ENCODE measurements at regions of chr17 and their contacts with region 1.

Region 1: DNA sequence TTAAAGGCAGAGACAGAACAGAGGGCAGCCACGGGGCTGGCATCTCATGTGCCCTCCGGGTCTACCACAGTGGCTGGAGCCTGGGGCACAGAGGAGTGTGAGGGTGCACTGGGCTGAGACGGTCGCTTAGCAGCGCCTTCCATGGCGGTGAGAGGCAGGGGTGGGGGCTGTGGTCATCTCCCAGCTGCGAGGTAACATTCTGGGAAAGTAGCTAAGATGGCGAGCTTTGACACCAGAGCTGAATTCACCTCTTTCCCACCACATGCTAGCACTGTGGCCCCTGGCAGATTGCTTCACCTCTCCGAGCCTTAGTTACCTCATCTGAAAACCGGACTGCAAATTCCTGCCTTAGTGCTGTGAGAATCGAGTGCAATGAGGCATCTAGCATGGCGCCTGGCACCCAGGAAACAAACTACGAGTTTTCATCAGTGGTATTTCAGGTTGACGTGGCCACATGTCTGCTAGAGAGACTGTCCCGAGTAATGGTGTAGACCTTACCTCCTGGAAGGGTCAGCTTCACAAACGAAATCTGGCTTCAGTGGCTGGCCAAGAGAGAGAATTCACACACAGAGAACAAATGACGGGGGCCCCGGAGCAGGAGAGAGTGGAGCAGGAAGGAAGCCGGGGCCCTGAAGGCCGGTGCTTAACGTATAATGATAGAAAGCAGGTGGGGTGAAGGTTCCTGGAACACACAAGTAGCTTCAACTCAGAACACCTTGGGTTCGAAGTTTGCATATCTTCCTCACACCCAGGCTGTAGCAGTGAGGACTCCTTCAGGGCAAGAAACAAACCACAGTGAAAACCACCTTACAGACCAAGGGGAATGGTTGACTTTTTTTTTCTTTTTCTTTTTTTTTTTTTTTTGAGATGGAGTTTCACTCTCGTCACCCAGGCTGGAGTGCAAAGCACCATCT is 63.9 kb upstream of the RPH3AL start:
- DNase-seq: peak in 13 of 14 experiments; percentile 22 to 86 (median 44)
- ATAC-seq: peak; percentile 30
- H3K4me3 ChIP-seq: peak overlapping the region; percentile 64
- H3K4me3 Mint-ChIP-seq: peak overlapping the region; percentile 88
- H3K27ac ChIP-seq: peak overlapping the region; percentile 78 to 81
- H3K27ac Mint-ChIP-seq: peak overlapping the region; percentile 95
- H3K4me1 ChIP-seq: peaks cover 97% of the 10 kb centered on the region
- H3K4me1 Mint-ChIP-seq: peaks cover 89% of the 10 kb centered on the region
- H3K27me3 ChIP-seq: no peaks in the 10 kb centered on the region
- H3K27me3 Mint-ChIP-seq: no peaks in the 10 kb centered on the region
- CTCF ChIP-seq: no peak

Region 2: DNA sequence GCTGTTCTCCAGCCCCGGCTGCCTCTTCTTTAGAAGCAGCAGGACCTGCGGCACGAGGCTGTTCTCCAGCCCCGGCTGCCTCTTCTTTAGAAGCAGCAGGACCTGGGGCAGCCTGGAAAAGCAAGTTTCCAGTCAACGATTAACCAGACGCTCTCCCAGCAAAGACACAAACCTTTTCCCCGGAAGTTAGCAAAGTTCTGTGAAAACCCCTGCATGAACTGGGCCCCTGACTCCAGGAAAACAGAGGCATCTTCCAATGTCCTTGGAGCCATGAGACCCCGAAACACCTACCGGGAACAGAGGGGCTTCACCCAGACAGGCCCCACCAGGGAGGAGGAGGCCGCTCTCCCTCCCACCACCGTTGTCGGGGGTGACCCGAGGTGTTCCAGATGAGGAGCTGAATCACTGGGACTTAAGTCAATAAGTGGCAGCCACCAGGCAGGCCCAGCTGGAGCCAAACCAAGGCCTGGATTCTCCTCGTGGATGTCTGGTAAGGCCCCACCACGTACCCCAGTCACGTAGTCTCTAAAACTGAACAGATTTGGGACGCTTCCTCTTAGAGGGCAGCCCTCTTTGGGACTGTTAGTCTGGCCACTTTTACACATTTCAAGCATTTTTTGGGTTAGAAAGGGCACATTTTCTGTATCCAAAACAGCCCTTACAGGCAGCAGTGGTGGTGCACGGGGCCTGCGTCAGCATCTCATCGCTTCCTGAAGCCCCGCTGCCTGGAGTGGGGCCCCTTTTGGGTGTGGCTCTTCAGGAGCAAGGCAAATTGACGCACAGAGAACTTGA is 63.9 kb before region 1 on chr17 and contains the start of gene RPH3AL:
- CTCF ChIA-PET with region 1: no interaction called
- POLR2A ChIA-PET with region 1: no interaction called
- intact Hi-C with region 1: no loop called
- DNase-seq: no peak
- ATAC-seq: no peak
- H3K4me3 ChIP-seq: no peak within 1 kb of the TSS
- H3K4me3 Mint-ChIP-seq: no peak within 1 kb of the TSS
- H3K27ac ChIP-seq: no peak within 1 kb of the TSS
- H3K27ac Mint-ChIP-seq: no peak within 1 kb of the TSS
- H3K4me1 ChIP-seq: no peaks in the 10 kb centered on the region
- H3K4me1 Mint-ChIP-seq: no peaks in the 10 kb centered on the region
- H3K27me3 ChIP-seq: no peaks in the 10 kb centered on the region
- H3K27me3 Mint-ChIP-seq: no peaks in the 10 kb centered on the region
- CTCF ChIP-seq: no peak
- total RNA-seq, gene RPH3AL: 2.4 to 2.8 TPM

Region 3: DNA sequence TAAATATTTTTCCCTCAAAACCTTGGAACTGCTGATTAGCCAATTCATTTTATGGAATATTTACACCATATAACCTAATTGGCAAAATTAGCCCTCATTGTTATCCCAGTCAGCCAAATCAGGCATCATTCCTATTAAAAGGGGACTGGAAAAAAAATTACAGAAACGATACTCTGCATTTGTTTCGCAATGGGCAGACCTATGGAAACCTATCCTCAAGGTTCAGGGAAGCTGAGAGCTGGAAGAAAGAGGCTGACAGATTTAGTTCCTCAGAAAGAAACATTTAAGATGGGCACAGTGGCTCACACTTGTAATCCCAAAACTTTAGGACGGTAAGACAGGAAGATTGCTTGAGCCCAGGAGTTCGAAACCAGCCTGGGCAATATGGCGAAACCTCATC is 21.6 kb after region 1 on chr17:
- CTCF ChIA-PET with region 1: interaction called, 12 read pairs
- POLR2A ChIA-PET with region 1: interaction called, 4 read pairs
- intact Hi-C with region 1: loop called in 1 of 2 experiments (anchors 2 kb)
- DNase-seq: no peak
- ATAC-seq: no peak
- H3K4me3 ChIP-seq: no peak overlapping the region
- H3K4me3 Mint-ChIP-seq: no peak overlapping the region
- H3K27ac ChIP-seq: no peak overlapping the region
- H3K27ac Mint-ChIP-seq: no peak overlapping the region
- H3K4me1 ChIP-seq: no peaks in the 10 kb centered on the region
- H3K4me1 Mint-ChIP-seq: no peaks in the 10 kb centered on the region
- H3K27me3 ChIP-seq: no peaks in the 10 kb centered on the region
- H3K27me3 Mint-ChIP-seq: no peaks in the 10 kb centered on the region
- CTCF ChIP-seq: no peak

Region 4: GRCh38 chr17:491086-492021 is 74.8 kb after region 1 on chr17:
- CTCF ChIA-PET with region 1: interaction called, 14 read pairs
- POLR2A ChIA-PET with region 1: interaction called, 37 read pairs
- intact Hi-C with region 1: no loop called
- DNase-seq: peak in 10 of 14 experiments; percentile 9 to 66 (median 32)
- ATAC-seq: no peak
- H3K4me3 ChIP-seq: peak overlapping the region; percentile 25
- H3K4me3 Mint-ChIP-seq: peak overlapping the region; percentile 86
- H3K27ac ChIP-seq: no peak overlapping the region
- H3K27ac Mint-ChIP-seq: peak overlapping the region; percentile 88
- H3K4me1 ChIP-seq: peaks cover 25% of the 10 kb centered on the region
- H3K4me1 Mint-ChIP-seq: peaks cover 15% of the 10 kb centered on the region
- H3K27me3 ChIP-seq: no peaks in the 10 kb centered on the region
- H3K27me3 Mint-ChIP-seq: peaks cover 4% of the 10 kb centered on the region
- CTCF ChIP-seq: no peak

Measured in CD4-positive, alpha-beta T cell (primary cell).